Right ventricle myocardium inferior (tissue), 1 donor: ENCODE measurements at regions of chr20 and their contacts with region 1.

Region 1: DNA sequence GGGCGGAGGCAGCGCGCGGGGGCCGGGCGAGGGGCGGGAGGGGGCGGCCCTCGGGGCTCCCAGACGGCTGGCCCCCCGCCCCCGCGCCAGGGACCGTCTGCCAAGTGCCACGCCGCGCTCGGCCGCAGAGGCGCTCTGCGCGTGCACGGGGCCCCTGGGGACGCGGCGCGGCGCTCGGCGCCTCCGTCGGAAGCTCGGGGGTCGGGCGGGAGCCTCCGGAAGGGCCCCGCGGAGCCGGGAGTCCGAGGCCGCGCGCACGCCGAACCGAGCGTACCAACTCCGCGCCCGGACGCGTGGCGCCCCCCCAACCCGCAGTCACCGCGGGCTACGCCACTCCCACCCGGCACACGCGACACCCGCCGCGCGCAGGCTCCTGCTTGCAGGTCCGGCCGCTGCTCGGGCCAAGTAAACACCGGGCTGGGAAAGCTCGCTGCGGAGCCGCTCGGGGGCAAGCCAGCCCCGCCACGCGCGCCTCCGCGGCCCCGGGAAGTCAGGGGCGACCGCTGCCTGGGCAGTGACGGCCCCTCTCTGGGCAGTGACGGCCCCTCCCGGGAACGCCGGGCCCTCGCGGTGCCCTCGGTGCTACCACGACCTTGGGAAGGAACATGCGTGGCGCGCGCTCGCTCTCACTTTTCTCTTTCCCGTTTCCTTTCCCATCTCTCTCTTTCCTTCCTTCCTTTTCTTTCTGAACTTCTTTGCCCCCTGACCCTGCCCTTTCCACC is 384 bp upstream of the PREX1 start:
- DNase-seq: peak; percentile 96
- ATAC-seq: peak; percentile 75

Region 2: GRCh38 chr20:48657475-48658470 is 170.4 kb before region 1 on chr20:
- intact Hi-C with region 1: loop called (anchors 5 kb)
- DNase-seq: peak; percentile 75
- ATAC-seq: peak; percentile 86

Region 3: GRCh38 chr20:48682529-48683251 is 145.5 kb before region 1 on chr20:
- intact Hi-C with region 1: loop called (anchors 5 kb)
- DNase-seq: peak; percentile 92
- ATAC-seq: peak; percentile 80

Region 4: GRCh38 chr20:48760403-48760983 is 67.7 kb before region 1 on chr20:
- intact Hi-C with region 1: loop called (anchors 5 kb)
- DNase-seq: no peak
- ATAC-seq: no peak

Region 5: GRCh38 chr20:48791015-48791514 is 37.1 kb before region 1 on chr20:
- intact Hi-C with region 1: loop called (anchors 1 kb)
- DNase-seq: no peak
- ATAC-seq: no peak

Region 6: GRCh38 chr20:48897246-48897994 is 69.2 kb after region 1 on chr20:
- intact Hi-C with region 1: loop called (anchors 10 kb)
- DNase-seq: no peak
- ATAC-seq: no peak

Region 7: GRCh38 chr20:49199729-49200293 is 371.6 kb after region 1 on chr20:
- intact Hi-C with region 1: no loop called
- DNase-seq: no peak
- ATAC-seq: no peak